GM18951 (cell line): ENCODE measurements at regions of chr12 and their contacts with region 1.

Region 1: DNA sequence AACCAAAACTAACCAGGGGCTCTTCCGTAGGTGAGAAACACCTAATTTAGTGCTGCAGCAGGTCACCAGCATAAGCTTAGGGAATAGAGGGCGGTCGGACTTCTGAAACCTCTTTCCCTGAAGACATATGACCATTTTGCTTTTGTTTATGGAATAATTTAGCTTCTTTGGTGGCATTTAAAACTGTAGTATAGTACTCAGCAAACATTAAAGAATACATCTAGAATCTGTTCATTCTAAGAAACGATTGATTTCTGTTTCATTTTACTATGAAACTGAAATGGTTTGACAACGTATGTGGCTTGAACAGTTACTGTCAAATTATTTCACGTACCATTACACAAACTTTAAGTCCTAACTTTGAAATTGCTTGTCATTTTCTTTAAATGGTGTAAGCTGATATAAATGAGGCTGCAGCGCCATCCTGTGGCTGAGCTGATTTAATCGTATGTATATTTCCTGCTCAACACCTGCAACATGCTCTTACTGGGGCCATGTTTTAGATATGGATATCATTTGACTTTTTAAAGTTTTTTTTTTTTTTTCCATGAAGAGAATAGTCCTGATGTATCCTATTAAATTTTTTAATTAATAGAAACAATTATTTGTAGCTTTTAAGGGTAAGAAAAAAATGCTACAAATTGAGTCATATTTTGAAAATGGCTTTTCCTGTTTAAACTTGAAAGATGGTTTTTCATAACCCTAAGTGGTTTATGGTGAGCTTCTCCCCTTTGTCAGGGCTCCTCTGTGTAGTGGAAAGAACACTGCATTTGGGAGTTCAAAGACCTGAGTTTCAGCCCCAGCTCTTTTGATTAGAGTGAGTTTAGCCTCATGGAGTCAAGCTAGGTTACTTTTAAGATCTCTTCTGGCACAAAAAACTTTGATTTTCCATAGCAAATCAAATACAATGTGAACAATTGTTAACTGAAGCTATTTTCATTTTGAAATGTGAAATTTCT is 27.4 kb downstream of the CFAP54 start:
- POLR2A ChIP-seq: no peak

Region 2: GRCh38 chr12:96054244-96054610 is 462.5 kb before region 1 on chr12:
- in situ Hi-C with region 1: loop called (anchors 10 kb)
- POLR2A ChIP-seq: no peak

Region 3: DNA sequence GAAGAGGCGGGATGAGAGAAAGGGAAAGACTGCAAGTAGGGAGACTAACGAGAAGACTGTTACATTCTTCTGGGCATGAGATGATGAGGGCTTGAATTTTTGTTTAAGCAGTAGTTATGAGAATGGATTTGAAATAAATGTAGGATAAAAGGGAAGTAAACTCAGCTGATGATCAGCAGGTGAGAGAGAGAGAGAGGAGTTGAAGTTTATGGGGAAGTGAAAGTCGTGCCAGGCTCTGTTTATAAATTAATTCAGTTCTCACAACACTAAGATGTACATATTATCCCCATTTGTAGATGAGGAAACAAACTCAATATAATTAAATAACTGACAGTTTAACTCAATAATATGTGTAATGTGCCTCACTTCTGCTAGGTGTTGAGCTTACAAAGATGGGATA is 775.8 kb after region 1 on chr12:
- in situ Hi-C with region 1: no loop called
- POLR2A ChIP-seq: no peak